Right cardiac atrium (tissue), 5 donors: ENCODE measurements at regions of chr2 and their contacts with region 1.

Region 1: DNA sequence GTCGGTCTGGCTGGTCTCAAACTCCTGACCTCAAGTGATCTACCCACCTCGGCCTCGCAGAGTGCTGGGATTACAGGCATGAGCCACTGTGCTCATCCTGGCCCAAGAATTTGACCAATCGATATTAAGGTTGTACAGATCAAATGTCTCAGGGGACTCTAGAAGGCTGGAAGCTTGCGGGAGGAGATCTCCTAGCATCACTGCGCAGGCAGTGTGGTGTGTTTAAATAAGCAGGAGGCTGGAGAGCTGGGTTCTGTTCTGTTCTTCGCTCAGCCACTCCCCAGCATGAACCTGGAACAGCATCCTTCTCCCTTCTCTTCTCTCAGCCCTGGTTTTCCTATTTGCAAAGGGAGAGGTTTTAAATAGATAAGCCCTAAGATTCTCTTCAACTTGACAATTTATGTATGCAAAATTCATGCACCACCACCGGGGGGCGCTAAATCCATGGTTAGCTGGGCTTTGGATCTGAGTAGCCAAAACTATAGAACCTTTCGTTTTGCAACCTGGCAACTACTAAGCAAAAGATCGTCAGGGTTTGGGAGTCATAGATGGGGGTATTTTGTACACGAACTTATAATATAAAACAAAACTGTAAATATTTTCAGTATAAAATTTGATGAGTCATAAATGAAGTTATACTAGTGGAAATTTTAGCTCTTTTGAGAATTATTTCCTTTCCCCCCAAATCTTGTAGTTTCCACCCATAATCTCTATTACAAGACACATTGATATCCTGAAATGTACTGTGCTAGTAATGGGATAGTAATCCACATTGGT is 60.6 kb downstream of the SLC16A14 start:
- DNase-seq: peak; percentile 75 to 90 (median 87)
- ATAC-seq: peak; percentile 43 to 71
- H3K4me3 ChIP-seq: no peak overlapping the region
- H3K27ac ChIP-seq: no peak overlapping the region
- H3K4me1 ChIP-seq: no peaks in the 10 kb centered on the region
- H3K27me3 ChIP-seq: no peaks in the 10 kb centered on the region

Region 2: GRCh38 chr2:229586746-229587705 is 421.1 kb before region 1 on chr2:
- intact Hi-C with region 1: no loop called
- DNase-seq: peak; percentile 81 to 94 (median 88)
- ATAC-seq: peak; percentile 97 to 98
- H3K4me3 ChIP-seq: peak overlapping the region; percentile 21
- H3K27ac ChIP-seq: no peak overlapping the region
- H3K4me1 ChIP-seq: peaks cover 2% of the 10 kb centered on the region
- H3K27me3 ChIP-seq: no peaks in the 10 kb centered on the region

Region 3: GRCh38 chr2:230068016-230068650 is 60.0 kb after region 1 on chr2:
- intact Hi-C with region 1: loop called in 1 of 4 experiments (anchors 10 kb)
- DNase-seq: peak; percentile 61 to 86 (median 85)
- ATAC-seq: peak; percentile 79 to 85
- H3K4me3 ChIP-seq: peak overlapping the region; percentile 52
- H3K27ac ChIP-seq: no peak overlapping the region
- H3K4me1 ChIP-seq: no peaks in the 10 kb centered on the region
- H3K27me3 ChIP-seq: no peaks in the 10 kb centered on the region

Region 4: DNA sequence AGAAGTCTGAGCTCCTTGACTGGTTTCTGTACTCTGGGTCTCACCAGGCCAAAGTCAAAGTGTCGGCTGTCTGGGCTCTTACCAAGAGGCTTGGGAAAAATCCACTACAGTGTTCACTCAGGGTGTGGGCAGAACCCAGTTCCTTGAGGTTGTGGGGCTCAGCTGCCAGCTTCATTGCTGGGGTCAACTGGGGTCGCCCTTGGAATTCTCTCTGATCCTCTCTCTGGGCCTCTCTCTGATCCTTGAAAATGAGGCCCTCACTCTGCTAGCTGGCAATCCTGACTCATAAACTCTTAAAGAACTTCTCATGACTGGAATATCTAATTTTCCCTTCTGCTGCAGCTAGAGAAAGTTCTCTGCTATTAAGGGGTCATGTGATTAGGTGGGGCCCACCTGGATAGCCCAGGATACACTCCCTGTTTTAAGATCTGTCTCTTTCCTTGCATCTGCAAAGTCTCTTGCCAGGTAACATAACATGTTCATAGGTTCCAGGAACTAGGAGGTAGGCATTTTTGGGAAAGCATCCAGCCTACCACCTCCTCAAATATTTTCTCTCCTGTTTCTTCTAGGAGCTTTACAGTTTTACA is 145.4 kb after region 1 on chr2:
- intact Hi-C with region 1: loop called in 2 of 4 experiments (anchors 5 to 10 kb)
- DNase-seq: no peak
- ATAC-seq: no peak
- H3K4me3 ChIP-seq: no peak overlapping the region
- H3K27ac ChIP-seq: no peak overlapping the region
- H3K4me1 ChIP-seq: no peaks in the 10 kb centered on the region
- H3K27me3 ChIP-seq: no peaks in the 10 kb centered on the region

Region 5: GRCh38 chr2:230160112-230160660 is 152.1 kb after region 1 on chr2:
- intact Hi-C with region 1: loop called (anchors 2 to 10 kb)
- DNase-seq: peak; percentile 28 to 64 (median 63)
- ATAC-seq: peak; percentile 61 to 78
- H3K4me3 ChIP-seq: no peak overlapping the region
- H3K27ac ChIP-seq: no peak overlapping the region
- H3K4me1 ChIP-seq: no peaks in the 10 kb centered on the region
- H3K27me3 ChIP-seq: no peaks in the 10 kb centered on the region

Region 6: DNA sequence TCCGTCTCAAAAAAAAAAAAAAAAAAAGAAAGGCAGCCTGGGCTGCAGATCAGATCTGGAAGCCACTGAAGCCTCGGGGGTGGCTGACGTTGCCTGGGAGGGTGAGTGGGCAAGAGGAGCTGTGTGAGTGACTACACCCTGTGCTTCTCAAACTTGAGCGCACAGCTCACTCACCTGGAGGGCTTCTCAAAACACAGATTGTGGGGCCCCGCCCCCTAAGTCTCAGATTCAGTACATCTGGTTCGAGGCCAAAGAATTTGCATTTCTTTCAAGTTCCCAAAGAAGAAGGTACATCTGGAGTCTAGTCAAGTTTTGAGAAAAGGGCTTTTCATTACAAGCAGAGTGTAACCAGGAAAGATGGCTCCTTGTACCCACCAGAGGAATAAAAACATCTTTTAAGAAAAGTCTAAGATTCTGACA is 606.8 kb after region 1 on chr2:
- intact Hi-C with region 1: loop called (anchors 2 to 10 kb)
- DNase-seq: no peak
- ATAC-seq: no peak
- H3K4me3 ChIP-seq: no peak overlapping the region
- H3K27ac ChIP-seq: no peak overlapping the region
- H3K4me1 ChIP-seq: no peaks in the 10 kb centered on the region
- H3K27me3 ChIP-seq: no peaks in the 10 kb centered on the region